ENCODE measurements at regions of chr18 and their contacts with region 1.

Region 1: DNA sequence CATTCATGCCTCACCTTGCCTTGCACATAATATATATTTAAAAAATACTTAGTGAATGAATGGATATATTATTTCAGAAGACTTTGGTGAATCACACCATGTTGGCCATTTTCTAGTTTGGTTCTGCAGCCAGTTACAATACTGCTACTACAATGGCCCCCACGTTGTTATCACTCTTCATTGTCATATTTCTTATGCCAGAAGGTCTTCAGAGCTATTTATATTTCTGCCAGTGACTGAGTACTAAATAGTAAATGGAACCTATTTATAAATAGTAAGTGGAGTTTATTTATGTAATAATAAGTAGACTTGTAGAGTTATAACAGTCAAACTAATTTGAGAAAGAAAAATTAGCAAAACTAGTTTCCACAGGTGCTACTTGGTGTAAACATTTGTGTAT is 516.6 kb upstream of the SYT4 start:
- DNase-seq: no peak
- ATAC-seq: no peak
- H3K4me3 ChIP-seq: no peak overlapping the region
- H3K4me3 Mint-ChIP-seq: no peak overlapping the region
- H3K27ac ChIP-seq: no peak overlapping the region
- H3K27ac Mint-ChIP-seq: no peak overlapping the region
- H3K4me1 ChIP-seq: no peaks in the 10 kb centered on the region
- H3K4me1 Mint-ChIP-seq: no peaks in the 10 kb centered on the region
- H3K27me3 ChIP-seq: no peaks in the 10 kb centered on the region
- H3K27me3 Mint-ChIP-seq: no peaks in the 10 kb centered on the region
- CTCF ChIP-seq: no peak

Region 2: GRCh38 chr18:43735570-43735969 is 58.3 kb before region 1 on chr18:
- CTCF ChIA-PET with region 1: no interaction called
- POLR2A ChIA-PET with region 1: no interaction called
- intact Hi-C with region 1: loop called in 1 of 2 experiments (anchors 10 kb)
- DNase-seq: no peak
- ATAC-seq: no peak
- H3K4me3 ChIP-seq: no peak overlapping the region
- H3K4me3 Mint-ChIP-seq: no peak overlapping the region
- H3K27ac ChIP-seq: no peak overlapping the region
- H3K27ac Mint-ChIP-seq: no peak overlapping the region
- H3K4me1 ChIP-seq: no peaks in the 10 kb centered on the region
- H3K4me1 Mint-ChIP-seq: no peaks in the 10 kb centered on the region
- H3K27me3 ChIP-seq: no peaks in the 10 kb centered on the region
- H3K27me3 Mint-ChIP-seq: no peaks in the 10 kb centered on the region
- CTCF ChIP-seq: no peak